ENCODE measurements at regions of chr1 and their contacts with region 1.

Region 1: DNA sequence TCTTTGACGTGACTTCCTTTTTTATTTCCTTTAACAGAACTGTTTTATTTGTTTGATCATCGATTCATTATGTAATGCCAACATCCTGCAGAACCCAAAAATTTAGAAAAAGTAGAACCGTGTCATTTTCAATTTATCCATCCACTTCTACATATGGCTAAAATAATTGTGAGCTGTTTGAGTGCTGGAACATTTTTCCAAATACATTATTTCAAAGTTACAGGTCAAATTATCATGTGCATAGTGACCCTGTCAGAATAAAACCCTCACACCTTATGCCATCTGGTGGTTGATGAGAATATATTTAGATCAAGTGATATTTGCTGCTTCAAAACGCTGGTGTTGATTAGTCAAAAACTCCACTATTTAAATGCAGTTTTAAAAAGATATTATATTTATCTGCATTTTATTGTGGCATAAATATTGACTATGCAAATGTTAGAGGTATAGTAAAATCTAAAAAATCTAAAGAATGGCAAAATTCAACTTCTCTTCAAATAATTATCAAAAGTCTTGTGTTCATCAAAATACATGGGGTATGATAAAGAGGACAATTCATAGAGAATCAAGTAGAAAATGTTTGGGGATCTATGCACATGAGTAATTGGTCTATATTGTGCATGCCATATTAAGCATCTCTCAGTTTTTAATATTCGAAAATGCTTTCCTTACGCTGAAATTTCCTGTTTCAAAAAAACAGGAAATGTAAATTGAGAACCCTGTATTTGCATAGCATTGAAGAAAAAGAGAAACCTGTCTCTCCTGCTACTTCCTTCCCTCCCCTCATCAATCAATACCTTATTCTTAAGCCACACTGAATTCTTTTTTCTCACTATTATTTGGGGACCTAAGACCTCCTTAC is 39.7 kb downstream of the UBE2U start:
- DNase-seq: no peak
- H3K4me3 Mint-ChIP-seq: peak overlapping the region; percentile 40
- H3K27ac Mint-ChIP-seq: no peak overlapping the region
- H3K4me1 Mint-ChIP-seq: peaks cover 21% of the 10 kb centered on the region
- H3K27me3 Mint-ChIP-seq: peaks cover 4% of the 10 kb centered on the region

Region 2: DNA sequence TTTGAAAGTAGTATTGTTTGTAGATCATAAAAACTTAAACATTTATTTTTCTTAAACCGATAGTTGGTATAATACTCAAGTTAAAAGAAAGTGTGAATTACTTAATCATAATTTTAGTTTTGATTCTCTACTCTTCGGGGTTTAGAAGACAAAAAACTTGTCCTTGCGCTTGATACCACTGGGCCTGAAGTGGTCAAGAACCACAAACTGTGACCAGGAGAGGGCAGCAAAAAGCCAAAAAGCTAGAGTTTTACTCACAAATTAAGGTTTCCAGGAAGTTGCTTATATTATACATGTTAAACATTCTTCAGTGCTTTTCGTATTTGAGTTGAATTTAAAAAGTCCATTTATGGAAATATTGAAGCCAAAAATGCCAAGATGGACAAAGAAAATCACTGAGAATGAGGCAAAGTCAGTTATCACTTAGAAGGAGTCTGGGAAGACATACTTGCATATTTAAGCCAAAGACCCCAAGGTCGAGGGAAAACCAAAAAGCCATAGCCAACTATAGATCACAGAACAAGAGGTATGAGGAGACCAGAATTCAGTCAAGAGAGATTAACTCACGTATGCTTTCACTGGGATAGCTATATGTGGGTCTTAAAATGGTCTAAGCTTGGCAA is 685.6 kb before region 1 on chr1:
- CTCF ChIA-PET with region 1: no interaction called
- intact Hi-C with region 1: loop called (anchors 5 kb)
- DNase-seq: peak; percentile 52
- H3K4me3 Mint-ChIP-seq: no peak overlapping the region
- H3K27ac Mint-ChIP-seq: no peak overlapping the region
- H3K4me1 Mint-ChIP-seq: peaks cover 2% of the 10 kb centered on the region
- H3K27me3 Mint-ChIP-seq: no peaks in the 10 kb centered on the region

Region 3: DNA sequence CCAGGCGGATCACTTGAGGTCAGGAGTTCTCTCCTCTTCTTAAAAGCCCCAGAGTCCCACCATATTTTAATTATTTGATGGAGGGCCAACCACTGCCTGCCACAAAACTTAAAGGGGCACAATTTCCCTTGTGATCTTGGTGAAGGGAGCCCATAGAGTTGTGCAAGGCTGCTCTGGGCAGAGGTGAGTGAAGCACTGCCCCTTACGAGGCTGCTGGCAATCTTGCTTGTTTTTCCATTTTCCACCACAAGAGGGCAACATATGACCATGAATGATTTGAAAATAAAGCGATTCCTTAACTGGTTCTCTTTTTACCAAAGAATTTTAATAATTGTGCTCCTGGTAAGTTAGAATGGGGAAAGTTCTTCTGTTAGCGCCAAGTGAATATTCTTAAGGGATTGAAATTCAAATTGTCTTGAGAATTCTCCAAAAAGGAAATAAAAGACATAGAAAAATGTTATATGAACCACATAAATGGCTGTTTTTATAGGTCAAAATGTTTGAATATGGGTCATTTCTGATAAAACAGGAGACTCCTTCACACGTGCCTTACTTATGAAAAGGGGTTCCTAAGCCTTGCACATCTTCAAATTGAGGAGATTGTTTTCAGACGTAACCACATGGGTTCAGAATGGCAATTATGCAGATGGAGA is 627.2 kb before region 1 on chr1:
- CTCF ChIA-PET with region 1: interaction called, 7 read pairs
- intact Hi-C with region 1: loop called (anchors 1 kb)
- DNase-seq: peak; percentile 58
- H3K4me3 Mint-ChIP-seq: no peak overlapping the region
- H3K27ac Mint-ChIP-seq: no peak overlapping the region
- H3K4me1 Mint-ChIP-seq: peaks cover 4% of the 10 kb centered on the region
- H3K27me3 Mint-ChIP-seq: no peaks in the 10 kb centered on the region

Region 4: GRCh38 chr1:63691701-63692425 is 551.3 kb before region 1 on chr1:
- CTCF ChIA-PET with region 1: interaction called, 23 read pairs
- intact Hi-C with region 1: loop called (anchors 1 kb)
- DNase-seq: peak; percentile 65
- H3K4me3 Mint-ChIP-seq: no peak overlapping the region
- H3K27ac Mint-ChIP-seq: no peak overlapping the region
- H3K4me1 Mint-ChIP-seq: peaks cover 5% of the 10 kb centered on the region
- H3K27me3 Mint-ChIP-seq: no peaks in the 10 kb centered on the region

Region 5: GRCh38 chr1:63917571-63918417 is 325.3 kb before region 1 on chr1:
- CTCF ChIA-PET with region 1: no interaction called
- intact Hi-C with region 1: loop called (anchors 5 kb)
- DNase-seq: peak; percentile 42
- H3K4me3 Mint-ChIP-seq: no peak overlapping the region
- H3K27ac Mint-ChIP-seq: no peak overlapping the region
- H3K4me1 Mint-ChIP-seq: no peaks in the 10 kb centered on the region
- H3K27me3 Mint-ChIP-seq: no peaks in the 10 kb centered on the region

Measured in activated naive CD4-positive, alpha-beta T cell treated with anti-CD3 and anti-CD28 coated beads for 36 hours (primary cell).